ENCODE measurements at regions of chr5 and their contacts with region 1.

Region 1: GRCh38 chr5:154754460-154755360 is 467 bp upstream of the LARP1 start:
- DNase-seq: peak; percentile 94 to 99 (median 96)
- ATAC-seq: peak; percentile 86
- H3K4me3 ChIP-seq: peak overlapping the region; percentile 83
- H3K27ac ChIP-seq: peak overlapping the region; percentile 99
- H3K4me1 ChIP-seq: peaks cover 30 to 40% of the 10 kb centered on the region in 2 experiments
- H3K27me3 ChIP-seq: no peaks in the 10 kb centered on the region
- CTCF ChIP-seq: peak; percentile 61 to 90 (median 84)
- EP300 ChIP-seq: peak; percentile 62; the same call in 1 of the 2 replicates
- POLR2A ChIP-seq: peak; percentile 57
- RAD21 ChIP-seq: peak in 1 of 2 experiments; percentile 50; a peak in 2 of 4 replicates

Region 2: GRCh38 chr5:154683101-154683880 is 71.4 kb before region 1 on chr5:
- CTCF ChIA-PET with region 1: interaction called, 11 read pairs
- POLR2A ChIA-PET with region 1: interaction called, 3 read pairs
- in situ Hi-C with region 1: no loop called
- intact Hi-C with region 1: loop called (anchors 1 kb)
- DNase-seq: no peak
- ATAC-seq: peak; percentile 26; the same call in 2 of the 3 replicates
- H3K4me3 ChIP-seq: peak overlapping the region; percentile 43
- H3K27ac ChIP-seq: peak overlapping the region; percentile 83
- H3K4me1 ChIP-seq: peaks cover 12% of the 10 kb centered on the region in 2 experiments; a peak in 4 of 5 replicates
- H3K27me3 ChIP-seq: no peaks in the 10 kb centered on the region
- CTCF ChIP-seq: no peak; a peak in 1 of 6 replicates
- EP300 ChIP-seq: no peak
- POLR2A ChIP-seq: no peak
- RAD21 ChIP-seq: no peak

Region 3: GRCh38 chr5:154771383-154771901 is 16.7 kb after region 1 on chr5:
- CTCF ChIA-PET with region 1: no interaction called
- POLR2A ChIA-PET with region 1: interaction called, 53 read pairs
- in situ Hi-C with region 1: no loop called
- intact Hi-C with region 1: no loop called
- DNase-seq: no peak
- ATAC-seq: peak; percentile 47
- H3K4me3 ChIP-seq: no peak overlapping the region
- H3K27ac ChIP-seq: peak overlapping the region; percentile 36; the same call in 2 of the 3 replicates
- H3K4me1 ChIP-seq: peaks cover 50 to 71% of the 10 kb centered on the region in 2 experiments
- H3K27me3 ChIP-seq: no peaks in the 10 kb centered on the region
- CTCF ChIP-seq: peak; percentile 19 to 34 (median 23); a peak in 3 of 6 replicates
- EP300 ChIP-seq: no peak
- POLR2A ChIP-seq: no peak
- RAD21 ChIP-seq: no peak

Region 4: GRCh38 chr5:154783774-154784460 is 29.2 kb after region 1 on chr5:
- CTCF ChIA-PET with region 1: no interaction called
- POLR2A ChIA-PET with region 1: interaction called, 12 read pairs
- in situ Hi-C with region 1: no loop called
- intact Hi-C with region 1: no loop called
- DNase-seq: peak in 2 of 4 experiments; percentile 33 to 50
- ATAC-seq: peak; percentile 55
- H3K4me3 ChIP-seq: no peak overlapping the region
- H3K27ac ChIP-seq: peak overlapping the region; percentile 52; the same call in 2 of the 3 replicates
- H3K4me1 ChIP-seq: peaks cover 38 to 64% of the 10 kb centered on the region in 2 experiments
- H3K27me3 ChIP-seq: no peaks in the 10 kb centered on the region
- CTCF ChIP-seq: no peak
- EP300 ChIP-seq: no peak
- POLR2A ChIP-seq: no peak
- RAD21 ChIP-seq: no peak

Region 5: DNA sequence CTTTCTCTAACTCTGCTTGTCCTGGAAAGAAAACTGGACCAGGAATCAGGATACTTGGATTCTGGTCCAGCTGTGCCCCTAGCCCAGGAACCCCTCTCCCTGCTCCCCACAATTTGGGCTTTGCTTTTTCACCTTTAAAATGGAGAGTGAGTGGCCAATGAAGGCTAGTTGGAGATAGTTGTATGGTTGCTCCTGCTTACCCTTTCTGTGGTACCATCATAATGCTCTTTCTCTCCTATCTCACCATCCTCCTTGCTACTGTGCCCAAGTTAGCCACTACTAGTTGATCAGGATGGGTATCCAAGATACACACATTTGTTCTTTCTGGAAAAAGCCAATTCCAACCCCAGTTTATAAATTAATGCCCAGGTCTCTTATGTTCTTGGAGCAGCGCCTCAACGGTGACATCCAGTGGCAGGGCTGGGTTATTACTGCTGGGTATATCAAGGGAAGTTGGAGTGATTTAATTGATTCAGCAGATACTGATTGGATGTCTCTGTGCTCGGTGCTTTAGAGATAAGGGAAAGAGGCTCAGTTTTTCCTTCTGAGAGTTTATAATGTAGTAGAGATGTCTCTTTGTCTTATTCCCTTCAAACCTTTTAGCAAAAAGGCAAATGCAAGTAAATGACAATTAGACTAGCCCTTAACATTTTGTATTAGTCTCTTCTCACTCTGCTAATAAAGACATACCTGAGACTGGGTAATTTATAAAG is 57.1 kb after region 1 on chr5:
- CTCF ChIA-PET with region 1: no interaction called
- POLR2A ChIA-PET with region 1: interaction called, 4 read pairs
- in situ Hi-C with region 1: no loop called
- intact Hi-C with region 1: loop called (anchors 2 kb)
- DNase-seq: peak; percentile 57 to 71 (median 62)
- ATAC-seq: peak; percentile 84
- H3K4me3 ChIP-seq: no peak overlapping the region
- H3K27ac ChIP-seq: no peak overlapping the region
- H3K4me1 ChIP-seq: peaks cover 3 to 4% of the 10 kb centered on the region in 2 experiments; a peak in 3 of 5 replicates
- H3K27me3 ChIP-seq: no peaks in the 10 kb centered on the region
- CTCF ChIP-seq: peak; percentile 80 to 88 (median 82)
- EP300 ChIP-seq: no peak
- POLR2A ChIP-seq: no peak
- RAD21 ChIP-seq: peak; percentile 85

Region 6: DNA sequence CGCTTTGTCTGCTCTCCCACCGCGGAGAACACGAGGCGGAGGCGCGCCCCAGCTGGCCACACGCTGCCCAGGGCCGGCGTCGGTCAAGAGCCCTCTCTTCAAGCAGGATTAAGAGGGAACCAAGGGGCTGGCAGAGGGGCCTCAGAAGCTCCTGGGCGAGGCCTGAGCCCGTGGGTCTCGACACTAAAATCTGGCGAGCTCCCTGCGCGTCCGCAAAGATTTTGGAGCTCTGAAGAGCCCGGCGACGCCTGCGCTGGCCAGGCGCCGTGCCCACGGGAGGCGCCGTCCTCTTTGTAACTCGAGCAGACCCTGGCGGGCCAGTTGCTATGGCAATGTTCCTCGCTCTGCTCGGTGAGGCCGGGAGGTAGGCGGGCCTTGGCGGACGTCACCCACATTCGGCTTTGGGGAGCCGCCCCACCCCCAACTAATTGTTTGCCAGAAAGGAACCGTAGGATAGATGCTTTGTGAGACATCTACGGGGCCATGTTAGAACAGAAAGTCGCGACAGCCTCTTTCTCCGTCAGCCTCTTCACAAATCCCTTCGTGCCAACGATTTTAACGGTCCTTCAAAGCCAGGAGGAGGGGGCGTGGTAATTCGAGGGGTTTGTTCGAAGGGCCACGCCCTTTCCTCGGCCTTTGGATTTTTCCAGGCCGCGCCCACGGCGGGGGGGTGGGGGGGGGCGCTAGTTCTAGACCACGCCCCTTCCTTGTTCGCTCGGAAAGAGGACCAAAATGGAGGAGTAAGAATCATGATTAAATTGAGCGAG is 103.0 kb after region 1 on chr5:
- CTCF ChIA-PET with region 1: no interaction called
- POLR2A ChIA-PET with region 1: interaction called, 3 read pairs
- in situ Hi-C with region 1: no loop called
- intact Hi-C with region 1: loop called (anchors 2 kb)
- DNase-seq: peak; percentile 82 to 95 (median 87)
- ATAC-seq: peak; percentile 86
- H3K4me3 ChIP-seq: peak overlapping the region; percentile 88
- H3K27ac ChIP-seq: peak overlapping the region; percentile 95
- H3K4me1 ChIP-seq: peaks cover 17 to 31% of the 10 kb centered on the region in 2 experiments; a peak in 4 of 5 replicates
- H3K27me3 ChIP-seq: no peaks in the 10 kb centered on the region
- CTCF ChIP-seq: peak in 1 of 3 experiments; percentile 14; a peak in 1 of 6 replicates
- EP300 ChIP-seq: no peak
- POLR2A ChIP-seq: peak; percentile 1
- RAD21 ChIP-seq: no peak

Measured in K562 (cell line).